ENCODE measurements at regions of chr15 and their contacts with region 1.

Region 1: GRCh38 chr15:62958528-62959363 is 83.8 kb upstream of the TPM1 start:
- DNase-seq: no peak
- H3K4me3 ChIP-seq: no peak overlapping the region
- H3K27ac ChIP-seq: no peak overlapping the region
- H3K4me1 ChIP-seq: peaks cover 9% of the 10 kb centered on the region
- H3K27me3 ChIP-seq: no peaks in the 10 kb centered on the region
- CTCF ChIP-seq: no peak
- POLR2A ChIP-seq: no peak

Region 2: GRCh38 chr15:61141497-61142125 is 1817.1 kb before region 1 on chr15:
- intact Hi-C with region 1: loop called (anchors 5 kb)
- DNase-seq: no peak
- H3K4me3 ChIP-seq: no peak overlapping the region
- H3K27ac ChIP-seq: no peak overlapping the region
- H3K4me1 ChIP-seq: no peaks in the 10 kb centered on the region
- H3K27me3 ChIP-seq: no peaks in the 10 kb centered on the region
- CTCF ChIP-seq: no peak
- POLR2A ChIP-seq: no peak

Region 3: DNA sequence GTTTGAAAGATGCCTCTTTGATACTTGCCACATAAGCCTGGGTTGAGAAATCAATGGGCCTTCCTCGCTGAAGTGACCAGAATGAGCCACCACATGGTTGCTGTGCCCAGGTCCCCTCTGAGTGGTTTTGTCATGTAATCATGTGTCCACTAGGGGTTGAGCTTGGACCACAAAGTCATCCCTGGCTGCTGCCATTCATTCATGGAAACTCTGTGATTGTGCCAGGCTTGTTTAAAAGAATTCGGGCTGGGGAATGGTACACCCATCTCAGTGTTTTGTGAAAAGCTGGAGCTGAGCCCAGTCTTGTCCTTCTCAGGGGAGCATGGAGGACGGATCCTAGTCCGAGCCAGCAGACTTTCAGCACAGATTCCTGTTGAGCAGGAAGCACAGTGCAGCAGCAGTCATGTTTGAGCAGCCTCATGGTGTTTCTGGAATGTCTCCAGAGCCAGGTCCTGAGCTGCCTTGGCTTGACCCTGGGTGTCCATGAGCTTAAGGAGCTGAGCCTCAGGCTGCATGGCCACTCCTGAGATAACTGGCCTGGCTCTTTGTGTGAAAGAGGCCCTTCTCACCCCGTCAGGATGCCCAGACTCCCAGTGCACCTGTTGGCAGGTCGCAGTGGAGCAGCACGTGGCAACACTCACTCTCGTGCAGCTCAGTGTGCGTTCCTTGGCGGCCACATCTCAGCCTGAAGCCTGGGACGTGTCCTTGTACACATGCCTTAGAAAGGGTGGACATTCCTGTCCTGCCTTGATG is 176.5 kb before region 1 on chr15:
- intact Hi-C with region 1: no loop called
- DNase-seq: no peak
- H3K4me3 ChIP-seq: no peak overlapping the region
- H3K27ac ChIP-seq: peak overlapping the region; percentile 25
- H3K4me1 ChIP-seq: peaks cover 28% of the 10 kb centered on the region
- H3K27me3 ChIP-seq: no peaks in the 10 kb centered on the region
- CTCF ChIP-seq: peak; percentile 13 to 66 (median 33)
- POLR2A ChIP-seq: no peak

Region 4: GRCh38 chr15:63970621-63971426 is 1012.1 kb after region 1 on chr15:
- intact Hi-C with region 1: no loop called
- DNase-seq: peak; percentile 22 to 83
- H3K4me3 ChIP-seq: no peak overlapping the region
- H3K27ac ChIP-seq: peak overlapping the region; percentile 34
- H3K4me1 ChIP-seq: peaks cover 27% of the 10 kb centered on the region
- H3K27me3 ChIP-seq: no peaks in the 10 kb centered on the region
- CTCF ChIP-seq: no peak
- POLR2A ChIP-seq: no peak

Measured in vagina (tissue), 2 donors.